Right cardiac atrium (tissue), 5 donors: ENCODE measurements at regions of chr7 and their contacts with region 1.

Region 1: DNA sequence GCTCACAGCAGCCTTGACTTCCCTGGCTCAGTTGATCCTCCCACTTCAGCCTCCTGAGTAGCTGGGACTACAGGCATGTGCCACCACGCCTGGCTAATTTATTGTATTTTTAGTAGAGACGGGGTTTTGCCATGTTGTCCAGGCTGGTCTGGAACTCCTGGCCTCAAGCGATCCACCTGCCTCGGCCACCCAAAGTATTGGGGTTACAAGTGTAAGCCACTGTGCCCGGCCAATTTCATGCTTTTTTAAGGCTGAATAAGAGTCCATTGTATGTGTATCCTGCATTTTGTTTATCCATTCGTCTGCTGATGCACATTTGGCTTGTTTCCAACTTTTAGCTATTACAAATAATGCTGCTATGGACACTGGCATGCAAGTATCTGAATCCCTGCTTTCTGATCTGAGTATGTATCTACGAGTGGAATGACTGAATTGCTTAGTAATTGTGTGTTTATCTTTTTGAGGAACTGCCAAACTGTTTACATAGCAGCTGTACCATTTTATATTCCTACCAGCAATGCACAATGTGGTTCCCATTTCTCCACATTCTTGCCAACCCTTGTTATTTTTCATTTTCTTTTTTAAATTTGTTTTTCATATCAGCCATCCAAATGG is 37.3 kb upstream of the TPST1 start:
- DNase-seq: no peak
- ATAC-seq: no peak
- H3K4me3 ChIP-seq: no peak overlapping the region
- H3K27ac ChIP-seq: no peak overlapping the region
- H3K4me1 ChIP-seq: peaks cover 5% of the 10 kb centered on the region
- H3K27me3 ChIP-seq: no peaks in the 10 kb centered on the region

Region 2: DNA sequence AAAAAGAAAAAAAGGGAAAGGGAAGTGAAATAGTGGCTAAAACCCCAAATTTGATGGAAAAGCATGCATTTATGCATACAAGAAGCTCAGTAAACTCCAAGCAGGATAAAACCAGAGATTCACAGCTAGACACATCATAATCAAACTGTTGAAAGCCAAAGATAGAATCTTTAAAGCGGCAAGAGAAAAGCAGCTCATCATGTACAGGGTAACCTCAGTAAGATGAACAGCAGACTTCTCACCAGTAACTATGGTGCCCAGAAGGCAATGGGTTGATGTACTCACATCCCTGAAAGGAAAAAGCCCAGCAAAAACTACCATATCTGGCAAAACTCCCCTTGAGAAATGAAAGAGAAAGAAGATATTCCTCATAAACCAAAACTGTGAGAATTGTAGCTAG is 97.7 kb after region 1 on chr7:
- intact Hi-C with region 1: loop called in 1 of 4 experiments (anchors 10 kb)
- DNase-seq: no peak
- ATAC-seq: no peak
- H3K4me3 ChIP-seq: no peak overlapping the region
- H3K27ac ChIP-seq: no peak overlapping the region
- H3K4me1 ChIP-seq: no peaks in the 10 kb centered on the region
- H3K27me3 ChIP-seq: no peaks in the 10 kb centered on the region